GM13976 (cell line): ENCODE measurements at regions of chr12 and their contacts with region 1.

Region 1: DNA sequence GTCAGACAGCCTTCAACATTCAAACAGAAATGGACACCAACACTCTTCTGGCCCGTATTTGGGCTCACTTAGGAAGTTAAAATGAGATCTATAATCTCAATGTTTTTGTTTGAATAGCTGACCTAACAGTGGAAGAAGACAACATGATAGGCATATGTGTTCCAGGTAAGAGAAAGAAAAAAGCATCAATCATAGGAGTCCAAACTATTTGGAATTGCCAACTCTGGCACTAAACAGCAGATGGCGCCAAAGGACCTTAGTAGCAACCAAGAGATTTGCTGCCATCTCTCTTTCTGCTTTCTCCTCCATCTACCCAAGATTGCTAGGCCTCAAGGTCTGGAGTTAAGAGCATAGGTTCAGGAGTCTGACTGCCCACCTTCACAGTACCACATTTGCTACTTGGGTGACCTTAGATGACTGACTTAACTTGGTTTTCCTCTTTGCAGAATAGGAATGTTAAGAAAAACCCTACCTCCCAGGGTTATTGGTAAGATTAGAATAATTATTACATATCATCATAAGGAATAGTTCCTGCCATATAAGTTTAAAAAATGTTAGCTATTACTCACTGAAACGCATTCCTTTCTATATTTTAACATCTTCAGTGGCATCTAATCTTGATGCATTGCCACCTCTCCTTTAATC is 30.2 kb downstream of the PEX5 start:
- DNase-seq: peak; percentile 62
- CTCF ChIP-seq: peak; percentile 71

Region 2: DNA sequence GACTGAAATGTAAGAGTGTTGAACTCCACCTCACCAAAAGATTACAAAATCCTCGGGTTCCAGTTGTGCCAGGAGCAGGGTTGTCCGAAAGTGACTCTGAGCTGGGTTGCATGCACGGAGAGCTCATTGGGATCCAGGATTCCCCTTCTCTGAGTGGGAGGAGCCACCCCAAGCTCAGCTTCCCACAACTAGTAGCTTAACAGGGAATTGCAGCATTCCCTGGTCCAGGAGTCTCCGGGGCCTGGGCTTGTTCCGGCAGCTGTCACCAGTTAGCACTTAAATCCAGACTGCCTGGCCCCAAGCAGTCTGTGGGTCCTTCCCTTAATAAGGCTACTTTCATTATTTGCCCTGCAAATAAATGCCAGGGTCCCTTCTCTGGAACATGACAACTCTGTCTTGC is 969.4 kb before region 1 on chr12:
- in situ Hi-C with region 1: no loop called
- DNase-seq: no peak
- CTCF ChIP-seq: no peak

Region 3: GRCh38 chr12:7460375-7461259 is 240.9 kb after region 1 on chr12:
- in situ Hi-C with region 1: loop called (anchors 25 kb)
- DNase-seq: peak; percentile 58
- CTCF ChIP-seq: peak; percentile 70

Region 4: GRCh38 chr12:7642876-7643309 is 423.2 kb after region 1 on chr12:
- in situ Hi-C with region 1: loop called (anchors 5 kb)
- DNase-seq: no peak
- CTCF ChIP-seq: peak; percentile 20

Region 5: GRCh38 chr12:7806863-7807487 is 587.3 kb after region 1 on chr12:
- in situ Hi-C with region 1: loop called (anchors 25 kb)
- DNase-seq: peak; percentile 69
- CTCF ChIP-seq: peak; percentile 76